ENCODE measurements at regions of chr4 and their contacts with region 1.

Region 1: DNA sequence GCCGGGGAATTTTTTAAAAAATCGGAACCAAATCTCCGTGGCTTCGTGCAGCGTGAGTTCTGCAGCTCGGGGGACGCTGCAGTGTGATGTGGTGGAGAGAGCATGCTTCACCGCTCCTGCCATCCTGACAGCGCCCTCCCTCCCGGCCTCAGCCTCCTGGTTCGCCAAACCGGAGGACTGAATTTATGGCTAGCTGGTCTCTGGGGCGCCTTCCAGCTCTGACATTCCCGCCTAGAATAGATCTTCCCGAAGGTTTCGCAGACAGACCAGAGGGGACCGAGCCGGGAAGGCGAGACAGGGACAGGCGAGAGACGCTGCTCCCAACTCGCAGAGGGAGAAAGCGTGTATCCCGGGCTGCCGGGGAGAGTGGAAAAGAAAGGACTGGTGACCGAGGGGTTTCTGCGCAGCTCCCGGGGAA is 25.9 kb downstream of the HOPX start:
- DNase-seq: no peak
- H3K4me3 ChIP-seq: peak overlapping the region; percentile 56 to 66 (median 56)
- H3K27ac ChIP-seq: peak overlapping the region in 3 of 4 donors; percentile 31 to 58 (median 56)
- H3K4me1 ChIP-seq: peaks cover 22 to 36% (median 30%) of the 10 kb centered on the region in 4 donors
- H3K27me3 ChIP-seq: peaks cover 0 to 63% (median 13%) of the 10 kb centered on the region in 4 donors
- CTCF ChIP-seq: no peak
- EP300 ChIP-seq: no peak
- POLR2A ChIP-seq: no peak

Region 2: GRCh38 chr4:56799824-56800756 is 144.9 kb after region 1 on chr4:
- intact Hi-C with region 1: loop called (anchors 5 kb)
- DNase-seq: peak; percentile 94
- H3K4me3 ChIP-seq: peak overlapping the region; percentile 57 to 65 (median 59)
- H3K27ac ChIP-seq: peak overlapping the region; percentile 57 to 73 (median 70)
- H3K4me1 ChIP-seq: peaks cover 0 to 21% (median 20%) of the 10 kb centered on the region in 4 donors
- H3K27me3 ChIP-seq: no peaks in the 10 kb centered on the region
- CTCF ChIP-seq: peak; percentile 81 to 89 (median 87)
- EP300 ChIP-seq: no peak
- POLR2A ChIP-seq: no peak